ENCODE measurements at regions of chr10 and their contacts with region 1.

Region 1: DNA sequence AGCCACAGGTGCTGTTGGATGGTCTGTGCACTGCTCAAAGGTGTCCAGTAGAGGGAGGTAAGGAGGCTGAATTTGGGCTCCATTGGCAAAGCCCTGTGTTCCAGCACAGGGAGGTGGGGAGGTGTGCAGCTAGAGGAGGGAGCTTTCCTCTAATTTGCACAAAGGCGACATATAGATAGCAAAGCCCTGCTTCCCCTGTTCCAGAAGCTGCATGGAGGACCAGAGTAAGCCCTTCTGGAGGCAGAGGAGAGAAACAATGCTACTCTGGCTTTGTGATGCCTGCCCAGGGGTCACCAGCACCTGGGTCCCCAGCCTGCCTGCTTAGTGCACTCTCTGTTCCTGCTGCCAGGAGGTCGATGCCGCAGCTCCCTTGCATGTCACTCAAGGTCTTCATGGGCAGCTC is 3.4 kb upstream of the ARHGAP22 start:
- DNase-seq: peak; percentile 38
- H3K4me3 Mint-ChIP-seq: no peak overlapping the region
- H3K27ac Mint-ChIP-seq: no peak overlapping the region
- H3K4me1 Mint-ChIP-seq: peaks cover 2% of the 10 kb centered on the region
- H3K27me3 Mint-ChIP-seq: peaks cover 38% of the 10 kb centered on the region

Region 2: GRCh38 chr10:48623607-48624132 is 15.4 kb after region 1 on chr10:
- CTCF ChIA-PET with region 1: interaction called, 12 read pairs
- POLR2A ChIA-PET with region 1: no interaction called
- DNase-seq: no peak
- H3K4me3 Mint-ChIP-seq: no peak overlapping the region
- H3K27ac Mint-ChIP-seq: no peak overlapping the region
- H3K4me1 Mint-ChIP-seq: no peaks in the 10 kb centered on the region
- H3K27me3 Mint-ChIP-seq: peaks cover 26% of the 10 kb centered on the region

Region 3: DNA sequence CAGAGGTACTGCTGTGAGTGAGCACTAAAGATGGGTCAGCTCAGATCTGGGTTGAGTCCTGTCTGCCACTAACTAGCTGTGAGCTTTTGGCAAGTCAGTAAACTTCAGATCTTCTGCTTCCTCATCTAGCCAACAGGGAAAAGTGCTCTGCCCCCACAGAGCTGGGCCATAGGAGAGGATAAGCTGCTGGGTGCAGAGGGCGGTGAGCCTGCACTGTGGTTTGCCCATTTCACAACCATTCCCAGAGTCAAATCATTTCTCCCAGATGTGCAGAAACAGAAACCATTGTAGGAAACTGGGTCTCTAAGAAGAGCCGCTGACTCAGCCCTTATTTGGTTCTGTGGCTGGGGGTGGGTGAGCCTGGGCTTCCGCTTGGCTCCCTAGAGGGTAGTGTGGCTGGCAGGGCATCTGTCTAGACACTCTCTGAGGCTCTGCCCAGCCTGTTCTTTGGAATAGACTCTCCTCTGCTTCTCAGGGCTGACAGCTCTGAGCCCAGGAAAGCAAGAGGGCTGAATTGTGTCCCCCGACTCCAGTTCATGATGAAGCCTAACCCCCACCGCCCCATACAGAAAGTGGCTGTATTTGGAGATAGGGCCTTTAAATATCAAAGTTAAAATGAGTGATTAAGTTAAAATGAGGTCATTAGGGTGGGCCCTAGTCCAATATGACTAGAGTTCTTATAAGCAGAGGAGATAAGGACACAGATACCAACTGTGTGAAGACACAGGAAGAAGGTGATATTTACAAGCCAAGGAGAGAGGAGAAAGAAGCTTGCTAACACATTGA is 26.1 kb after region 1 on chr10:
- CTCF ChIA-PET with region 1: no interaction called
- POLR2A ChIA-PET with region 1: no interaction called
- DNase-seq: peak; percentile 34
- H3K4me3 Mint-ChIP-seq: no peak overlapping the region
- H3K27ac Mint-ChIP-seq: no peak overlapping the region
- H3K4me1 Mint-ChIP-seq: peaks cover 20% of the 10 kb centered on the region
- H3K27me3 Mint-ChIP-seq: peaks cover 30% of the 10 kb centered on the region

Measured in activated CD4-positive, alpha-beta T cell treated with anti-CD3 and anti-CD28 coated beads, Interleukin-2, amount 10 ng/mL, durations not matched to agents 7 days and 5 days (primary cell).